ENCODE measurements at regions of chr16 and their contacts with region 1.

Region 1: DNA sequence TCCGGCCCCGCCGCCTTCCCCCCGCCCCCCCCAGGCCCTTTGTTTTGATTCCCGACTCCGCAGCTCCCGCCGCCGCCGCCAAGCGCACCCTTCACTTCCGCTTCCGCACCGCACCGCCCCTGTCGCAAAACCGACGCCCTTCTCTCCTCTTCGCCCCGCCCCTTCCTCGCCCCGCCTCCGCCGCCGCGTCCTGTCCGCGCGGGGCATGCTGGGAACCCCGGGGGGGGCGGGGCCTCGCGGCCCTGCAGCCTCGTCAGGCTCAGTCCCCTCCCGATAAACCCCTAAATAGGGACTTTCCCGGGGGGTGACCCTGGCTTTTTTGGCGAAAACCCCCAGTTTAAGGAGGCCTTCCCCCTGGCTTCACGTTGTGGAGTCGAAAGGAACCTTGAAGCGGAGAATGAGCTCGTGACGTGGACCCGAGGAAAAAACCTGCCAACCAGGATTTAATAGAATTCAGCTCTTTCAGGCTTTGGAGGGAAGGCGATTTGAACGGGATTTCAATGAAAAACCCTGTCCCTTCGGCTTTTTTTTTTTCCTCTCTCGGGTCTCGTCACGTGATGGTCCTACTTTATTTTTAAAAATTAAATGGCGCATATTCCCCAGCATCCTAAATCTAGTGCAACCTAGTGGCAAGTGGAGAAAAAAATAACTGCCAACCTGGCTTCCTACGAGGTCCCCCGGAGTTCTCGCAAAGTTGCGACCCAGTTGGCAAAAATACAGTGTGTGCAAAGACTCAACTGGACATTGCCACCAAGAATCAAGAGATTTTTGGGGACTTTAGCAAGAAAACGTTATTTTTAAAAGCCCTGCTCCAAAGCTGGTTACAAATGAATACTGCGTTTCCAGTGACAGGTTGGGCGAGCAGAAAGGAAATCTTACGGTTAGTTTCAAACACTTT is at the start of gene MARF1:
- DNase-seq: peak; percentile 98
- H3K4me3 Mint-ChIP-seq: peak within 1 kb of the TSS; percentile 96
- H3K27ac Mint-ChIP-seq: peak within 1 kb of the TSS; percentile 96
- H3K4me1 Mint-ChIP-seq: peaks cover 49% of the 10 kb centered on the region
- H3K27me3 Mint-ChIP-seq: no peaks in the 10 kb centered on the region
- total RNA-seq, gene MARF1: 58.8 and 58.9 TPM in 2 replicates

Region 2: DNA sequence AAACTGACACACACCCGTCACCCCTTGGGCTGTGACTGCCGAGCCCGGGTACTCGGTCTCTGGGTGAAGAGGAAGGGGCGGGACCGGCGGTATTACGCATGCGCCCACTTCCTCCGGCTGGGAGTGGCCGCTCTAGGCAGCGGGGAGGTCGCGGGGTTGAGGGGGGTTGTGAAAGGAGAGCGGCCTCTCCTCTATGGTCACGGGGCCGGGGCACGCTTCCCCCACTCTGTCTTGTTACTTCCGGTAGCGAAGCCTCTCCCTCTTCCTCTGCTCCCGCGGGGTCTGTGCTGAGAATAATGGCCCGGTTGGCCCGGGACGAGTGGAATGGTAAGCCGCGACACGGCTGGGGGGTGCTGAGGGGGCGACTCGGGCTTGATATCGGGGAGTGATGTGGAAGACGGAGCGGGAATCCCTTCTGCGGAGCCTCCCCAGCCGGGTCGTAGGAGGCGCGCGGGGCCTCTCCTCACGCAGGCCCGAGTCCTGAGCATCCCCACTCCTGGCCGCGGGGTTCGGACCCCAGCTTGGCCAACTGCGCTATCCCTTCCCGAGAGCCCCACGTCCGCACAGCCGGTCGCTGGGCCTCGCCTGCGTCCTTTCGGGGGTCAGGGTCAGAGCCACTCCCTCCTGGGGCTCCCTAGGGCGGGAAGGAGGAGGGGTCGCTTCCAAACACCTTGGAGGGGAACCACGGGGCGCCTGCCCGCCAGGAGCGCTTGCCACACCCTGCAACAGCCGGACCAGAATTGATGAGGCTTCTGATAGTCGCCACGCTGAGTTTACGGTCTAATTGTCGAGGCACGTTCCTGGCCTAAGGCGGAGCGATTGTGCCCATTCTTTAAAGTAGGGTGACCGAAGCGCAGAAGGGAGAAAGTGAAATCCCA is 1010.4 kb before region 1 on chr16 and contains the start of gene BFAR:
- intact Hi-C with region 1: loop called (anchors 5 kb)
- DNase-seq: peak; percentile 99
- H3K4me3 Mint-ChIP-seq: peak within 1 kb of the TSS; percentile 100
- H3K27ac Mint-ChIP-seq: peak within 1 kb of the TSS; percentile 100
- H3K4me1 Mint-ChIP-seq: peaks cover 60% of the 10 kb centered on the region
- H3K27me3 Mint-ChIP-seq: no peaks in the 10 kb centered on the region
- total RNA-seq, gene BFAR: 59.8 and 64.8 TPM in 2 replicates

Region 3: GRCh38 chr16:15427648-15428239 is 215.6 kb before region 1 on chr16:
- intact Hi-C with region 1: loop called (anchors 2 kb)
- DNase-seq: peak; percentile 22
- H3K4me3 Mint-ChIP-seq: no peak overlapping the region
- H3K27ac Mint-ChIP-seq: no peak overlapping the region
- H3K4me1 Mint-ChIP-seq: no peaks in the 10 kb centered on the region
- H3K27me3 Mint-ChIP-seq: peaks cover 2% of the 10 kb centered on the region

Region 4: GRCh38 chr16:15482068-15482747 is 161.1 kb before region 1 on chr16:
- intact Hi-C with region 1: loop called (anchors 1 kb)
- DNase-seq: no peak
- H3K4me3 Mint-ChIP-seq: no peak overlapping the region
- H3K27ac Mint-ChIP-seq: peak overlapping the region; percentile 82
- H3K4me1 Mint-ChIP-seq: peaks cover 15% of the 10 kb centered on the region
- H3K27me3 Mint-ChIP-seq: no peaks in the 10 kb centered on the region

Region 5: GRCh38 chr16:15572329-15573001 is 70.8 kb before region 1 on chr16:
- intact Hi-C with region 1: loop called (anchors 1 kb)
- DNase-seq: no peak
- H3K4me3 Mint-ChIP-seq: no peak overlapping the region
- H3K27ac Mint-ChIP-seq: peak overlapping the region; percentile 69
- H3K4me1 Mint-ChIP-seq: peaks cover 27% of the 10 kb centered on the region
- H3K27me3 Mint-ChIP-seq: no peaks in the 10 kb centered on the region

Region 6: DNA sequence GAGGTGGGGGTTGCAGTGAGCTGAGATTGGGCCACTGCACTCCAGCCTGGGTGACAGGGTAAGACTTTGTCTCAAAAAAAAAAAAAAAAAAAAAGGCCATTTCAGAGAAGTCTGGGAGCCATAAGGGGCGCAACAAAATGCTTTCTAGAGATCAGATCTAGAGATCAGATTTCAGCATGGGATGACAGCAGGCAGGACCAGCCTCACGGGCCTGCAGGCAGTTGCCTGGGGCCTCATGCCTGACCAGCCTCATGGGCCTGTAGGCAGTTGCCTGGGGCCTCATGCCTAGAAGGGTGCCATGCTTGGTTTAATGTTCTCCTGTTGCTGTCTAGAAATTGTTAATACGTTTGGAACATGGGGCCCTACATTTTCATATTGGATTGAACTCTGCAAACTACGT is 59.8 kb before region 1 on chr16:
- intact Hi-C with region 1: no loop called
- DNase-seq: no peak
- H3K4me3 Mint-ChIP-seq: no peak overlapping the region
- H3K27ac Mint-ChIP-seq: no peak overlapping the region
- H3K4me1 Mint-ChIP-seq: peaks cover 6% of the 10 kb centered on the region
- H3K27me3 Mint-ChIP-seq: no peaks in the 10 kb centered on the region

Region 7: GRCh38 chr16:15672514-15673167 is 29.3 kb after region 1 on chr16:
- intact Hi-C with region 1: loop called (anchors 1 kb)
- DNase-seq: peak; percentile 84
- H3K4me3 Mint-ChIP-seq: peak overlapping the region; percentile 75
- H3K27ac Mint-ChIP-seq: peak overlapping the region; percentile 97
- H3K4me1 Mint-ChIP-seq: peaks cover 57% of the 10 kb centered on the region
- H3K27me3 Mint-ChIP-seq: no peaks in the 10 kb centered on the region

Region 8: DNA sequence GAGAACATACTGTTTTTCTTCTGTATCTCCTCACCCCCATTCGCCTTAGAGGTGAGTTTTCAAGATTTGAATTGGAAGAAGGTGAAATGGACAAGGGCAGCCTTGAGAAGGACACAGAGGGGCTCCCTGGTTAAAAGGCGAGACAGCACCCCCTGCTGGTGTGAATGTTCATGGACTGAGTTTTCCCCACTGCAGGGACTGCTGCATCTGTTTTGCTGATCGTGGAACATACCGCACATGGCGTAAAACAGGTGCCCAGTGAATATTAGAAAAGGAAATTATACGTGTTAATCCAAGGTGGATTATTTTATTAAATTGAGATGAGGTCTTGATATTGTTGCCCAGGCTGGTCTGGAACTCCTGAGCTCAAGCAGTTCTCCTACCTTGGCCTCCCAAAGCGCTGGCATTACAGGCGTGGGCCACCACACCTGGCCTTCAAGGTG is 61.3 kb after region 1 on chr16:
- intact Hi-C with region 1: loop called (anchors 1 kb)
- DNase-seq: peak; percentile 54
- H3K4me3 Mint-ChIP-seq: no peak overlapping the region
- H3K27ac Mint-ChIP-seq: peak overlapping the region; percentile 27
- H3K4me1 Mint-ChIP-seq: peaks cover 22% of the 10 kb centered on the region
- H3K27me3 Mint-ChIP-seq: no peaks in the 10 kb centered on the region

Region 9: DNA sequence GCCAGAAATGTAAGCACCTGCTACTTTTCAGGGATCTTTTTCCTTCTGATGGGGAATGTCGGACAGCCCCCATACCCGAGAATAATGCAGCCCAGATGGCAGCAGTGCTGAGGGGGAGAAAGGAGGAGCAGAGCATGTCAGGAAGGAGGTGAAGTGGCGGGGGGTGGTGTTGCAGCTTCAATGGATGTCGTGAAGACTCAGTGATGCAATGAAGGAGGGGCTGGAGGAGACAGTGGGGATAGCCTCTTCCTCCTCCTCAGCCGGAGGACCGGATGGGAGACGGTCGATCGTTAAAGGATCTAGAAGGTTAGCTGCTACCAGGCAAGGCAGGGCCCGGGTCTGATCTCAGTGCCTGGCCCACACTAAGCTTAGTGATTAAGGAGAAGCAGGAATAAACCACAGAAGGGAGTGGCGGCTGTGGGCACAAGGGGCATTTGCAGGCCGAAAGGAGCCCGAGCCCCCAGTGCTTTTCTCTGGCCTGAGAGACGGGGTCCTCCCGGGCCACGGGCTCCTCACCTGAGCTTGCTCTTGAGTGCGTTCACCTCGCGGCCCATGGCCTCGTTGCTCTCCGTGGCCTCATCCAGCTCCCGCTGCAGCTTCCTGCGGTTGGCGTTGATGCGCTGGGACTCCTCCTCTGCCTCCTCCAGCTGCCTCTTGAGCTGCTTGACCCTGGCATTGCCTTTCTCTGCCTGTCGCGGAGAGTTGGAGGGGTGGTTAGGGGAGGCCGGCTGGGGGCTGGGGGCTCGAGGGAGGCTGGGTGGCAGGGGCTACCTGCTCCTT is 71.3 kb after region 1 on chr16:
- intact Hi-C with region 1: no loop called
- DNase-seq: no peak
- H3K4me3 Mint-ChIP-seq: no peak overlapping the region
- H3K27ac Mint-ChIP-seq: no peak overlapping the region
- H3K4me1 Mint-ChIP-seq: no peaks in the 10 kb centered on the region
- H3K27me3 Mint-ChIP-seq: no peaks in the 10 kb centered on the region

Region 10: DNA sequence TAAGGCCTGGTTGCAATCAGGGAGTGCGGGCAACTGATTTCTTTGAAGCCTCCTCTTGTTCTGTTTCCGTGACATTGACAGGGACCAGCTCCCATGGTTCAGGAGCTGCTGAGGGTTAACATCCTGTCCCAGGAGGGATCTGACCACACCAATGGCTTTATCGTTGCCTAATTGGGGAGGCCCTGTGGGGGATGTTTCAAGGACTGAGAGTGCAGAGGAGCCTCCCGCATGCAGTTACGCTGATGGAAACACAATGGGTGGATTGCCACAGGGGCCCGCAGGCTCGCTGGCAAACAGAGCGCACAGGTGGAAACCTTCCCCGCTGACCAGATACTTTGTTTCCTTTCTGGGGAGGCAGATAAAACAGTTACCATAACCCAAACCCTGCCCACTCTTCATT is 282.3 kb after region 1 on chr16:
- intact Hi-C with region 1: no loop called
- DNase-seq: no peak
- H3K4me3 Mint-ChIP-seq: no peak overlapping the region
- H3K27ac Mint-ChIP-seq: no peak overlapping the region
- H3K4me1 Mint-ChIP-seq: no peaks in the 10 kb centered on the region
- H3K27me3 Mint-ChIP-seq: peaks cover 2% of the 10 kb centered on the region

Measured in activated T-helper 1 cell treated with anti-CD3 and anti-CD28 coated beads, Interleukin-12 subunit alpha, Interleukin-12 subunit beta, Interleukin-2, Interleukin-4 antibody, amounts not matched to agents 30 ng/mL and 10 ng/mL and 1 ng/mL, durations not matched to agents 14 hours and 24 hours and 36 hours (primary cell).